ENCODE measurements at regions of chr13 and their contacts with region 1.

Region 1: GRCh38 chr13:110455941-110456340 is 105.6 kb downstream of the RAB20 start:
- DNase-seq: peak; percentile 79 to 84
- H3K4me3 ChIP-seq: no peak overlapping the region
- H3K27ac ChIP-seq: no peak overlapping the region
- H3K4me1 ChIP-seq: peaks cover 0 to 5% (median 1%) of the 10 kb centered on the region in 4 experiments; a peak in 4 of 7 replicates
- H3K27me3 ChIP-seq: no peaks in the 10 kb centered on the region
- CTCF ChIP-seq: peak; percentile 97 to 99 (median 97)
- EP300 ChIP-seq: peak in 1 of 2 experiments; percentile 77; a peak in 1 of 3 replicates
- POLR2A ChIP-seq: no peak
- RAD21 ChIP-seq: peak; percentile 87 to 93

Region 2: GRCh38 chr13:110218581-110219201 is 237.2 kb before region 1 on chr13:
- CTCF ChIA-PET with region 1: interaction called, 13 read pairs
- POLR2A ChIA-PET with region 1: no interaction called
- DNase-seq: no peak
- H3K4me3 ChIP-seq: no peak overlapping the region
- H3K27ac ChIP-seq: no peak overlapping the region
- H3K4me1 ChIP-seq: peaks cover 0 to 2% (median 0%) of the 10 kb centered on the region in 4 experiments; a peak in 1 of 7 replicates
- H3K27me3 ChIP-seq: no peaks in the 10 kb centered on the region
- CTCF ChIP-seq: no peak
- EP300 ChIP-seq: no peak
- POLR2A ChIP-seq: no peak
- RAD21 ChIP-seq: no peak

Region 3: GRCh38 chr13:110361365-110361911 is 94.5 kb before region 1 on chr13:
- CTCF ChIA-PET with region 1: no interaction called
- POLR2A ChIA-PET with region 1: no interaction called
- DNase-seq: no peak
- H3K4me3 ChIP-seq: no peak overlapping the region
- H3K27ac ChIP-seq: no peak overlapping the region
- H3K4me1 ChIP-seq: no peaks in the 10 kb centered on the region; a peak in 1 of 7 replicates
- H3K27me3 ChIP-seq: no peaks in the 10 kb centered on the region
- CTCF ChIP-seq: no peak
- EP300 ChIP-seq: no peak
- POLR2A ChIP-seq: no peak
- RAD21 ChIP-seq: no peak

Region 4: DNA sequence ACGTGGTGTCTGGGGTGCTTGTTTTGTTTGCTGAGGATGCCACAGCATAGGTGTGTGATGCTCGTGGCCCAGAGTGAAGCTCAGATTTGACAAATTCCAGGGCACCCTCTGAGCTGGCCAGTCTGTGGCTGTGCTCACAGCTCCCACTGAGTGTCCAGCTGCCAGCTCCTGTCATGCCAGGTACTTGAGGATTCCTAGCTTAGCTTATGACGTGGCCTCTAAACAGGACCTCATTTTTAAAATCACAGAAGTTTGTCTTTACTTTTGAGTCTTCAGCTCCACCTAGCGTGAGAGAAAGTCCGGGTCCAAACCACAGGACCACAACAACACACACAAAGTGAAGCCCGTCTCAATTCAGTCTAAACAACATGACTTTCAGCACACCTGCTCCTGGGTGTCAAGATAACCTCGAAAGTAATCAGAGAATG is 11.7 kb before region 1 on chr13:
- CTCF ChIA-PET with region 1: interaction called, 19 read pairs
- POLR2A ChIA-PET with region 1: interaction called, 4 read pairs
- DNase-seq: no peak
- H3K4me3 ChIP-seq: no peak overlapping the region
- H3K27ac ChIP-seq: no peak overlapping the region
- H3K4me1 ChIP-seq: no peaks in the 10 kb centered on the region; a peak in 1 of 7 replicates
- H3K27me3 ChIP-seq: no peaks in the 10 kb centered on the region
- CTCF ChIP-seq: peak in 1 of 3 experiments; percentile 3; a peak in 1 of 4 replicates
- EP300 ChIP-seq: no peak
- POLR2A ChIP-seq: no peak
- RAD21 ChIP-seq: peak in 1 of 2 experiments; percentile 27; a peak in 1 of 4 replicates

Region 5: DNA sequence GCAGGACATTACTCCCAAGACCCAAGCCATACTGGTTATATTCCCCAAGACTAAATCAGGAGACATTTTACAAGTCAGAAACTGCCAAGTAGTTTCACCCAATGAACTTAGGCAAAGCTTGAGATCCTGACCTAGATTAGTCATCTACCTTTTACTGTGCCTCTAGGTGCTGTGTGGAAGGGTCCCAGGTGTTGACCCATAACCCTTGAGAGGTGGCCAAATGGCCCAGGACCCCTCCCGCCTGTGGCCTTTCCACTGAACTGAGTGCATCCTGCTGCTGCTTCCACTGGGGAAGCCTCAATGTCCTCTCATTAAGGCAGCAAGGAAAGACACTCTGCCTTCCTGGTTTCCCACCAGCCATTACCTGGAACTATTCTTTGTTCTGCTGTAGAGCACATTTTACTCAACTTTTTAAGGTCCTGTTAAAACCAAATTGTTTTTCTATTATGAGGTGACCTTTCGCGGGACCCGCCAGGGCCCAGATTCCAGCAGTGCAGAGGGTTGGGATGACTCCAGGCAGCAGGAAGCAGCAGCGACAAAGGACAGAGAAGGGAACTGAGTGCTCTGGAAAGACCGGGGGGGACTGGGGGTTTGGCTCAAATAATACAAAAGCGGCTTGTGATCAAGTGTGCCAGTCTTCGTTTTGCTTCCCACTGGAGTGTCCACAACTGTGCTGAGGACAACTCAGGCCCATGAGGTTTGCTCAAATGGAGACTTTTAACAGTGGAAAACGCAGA is 431.8 kb after region 1 on chr13:
- CTCF ChIA-PET with region 1: no interaction called
- POLR2A ChIA-PET with region 1: no interaction called
- DNase-seq: peak in 1 of 2 experiments; percentile 57
- H3K4me3 ChIP-seq: no peak overlapping the region
- H3K27ac ChIP-seq: peak overlapping the region; percentile 44; the same call in 1 of the 2 replicates
- H3K4me1 ChIP-seq: peaks cover 2 to 7% (median 4%) of the 10 kb centered on the region in 4 experiments; a peak in 5 of 7 replicates
- H3K27me3 ChIP-seq: no peaks in the 10 kb centered on the region
- CTCF ChIP-seq: no peak
- EP300 ChIP-seq: no peak
- POLR2A ChIP-seq: peak; percentile 28 to 30; a peak in 2 of 3 replicates
- RAD21 ChIP-seq: no peak; a peak in 1 of 4 replicates